Activated naive CD4-positive, alpha-beta T cell treated with anti-CD3 and anti-CD28 coated beads, Interleukin-2, amount 10 ng/mL, durations not matched to agents 7 days and 5 days (primary cell): ENCODE measurements at regions of chr13 and their contacts with region 1.

Region 1: GRCh38 chr13:108322206-108322824 is 52.8 kb downstream of the TNFSF13B start:
- DNase-seq: no peak
- H3K4me3 Mint-ChIP-seq: no peak overlapping the region
- H3K27ac Mint-ChIP-seq: no peak overlapping the region
- H3K4me1 Mint-ChIP-seq: peaks cover 32% of the 10 kb centered on the region
- H3K27me3 Mint-ChIP-seq: no peaks in the 10 kb centered on the region

Region 2: GRCh38 chr13:108407495-108407894 is 85.2 kb after region 1 on chr13:
- CTCF ChIA-PET with region 1: no interaction called
- DNase-seq: no peak
- H3K4me3 Mint-ChIP-seq: no peak overlapping the region
- H3K27ac Mint-ChIP-seq: no peak overlapping the region
- H3K4me1 Mint-ChIP-seq: peaks cover 49% of the 10 kb centered on the region
- H3K27me3 Mint-ChIP-seq: peaks cover 4% of the 10 kb centered on the region

Region 3: DNA sequence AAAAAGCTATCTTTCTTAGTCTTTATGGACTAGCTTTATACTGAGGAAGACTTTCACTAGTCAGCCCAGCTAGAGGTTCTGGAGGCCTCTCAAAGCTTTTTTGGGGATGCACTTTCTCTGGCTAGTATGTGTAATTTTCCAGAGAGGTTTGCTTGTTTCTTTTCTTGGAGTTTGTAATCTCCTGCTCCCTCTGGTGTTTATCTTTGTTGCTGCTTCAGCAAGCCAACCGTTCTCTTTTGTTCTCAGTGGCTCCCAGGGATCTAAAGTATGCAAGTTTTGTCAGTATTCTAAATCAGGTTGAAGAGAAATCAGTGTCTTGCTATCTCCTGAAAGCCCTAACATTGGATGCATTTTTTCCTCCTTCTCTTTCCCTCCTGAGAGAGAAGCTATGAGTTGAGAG is 185.9 kb after region 1 on chr13:
- CTCF ChIA-PET with region 1: interaction called, 20 read pairs
- DNase-seq: no peak
- H3K4me3 Mint-ChIP-seq: no peak overlapping the region
- H3K27ac Mint-ChIP-seq: no peak overlapping the region
- H3K4me1 Mint-ChIP-seq: no peaks in the 10 kb centered on the region
- H3K27me3 Mint-ChIP-seq: no peaks in the 10 kb centered on the region